ENCODE measurements at regions of chr1 and their contacts with region 1.

Region 1: GRCh38 chr1:54944610-54945544 is 35.6 kb upstream of the TMEM61 start:
- DNase-seq: peak; percentile 75
- H3K4me3 ChIP-seq: no peak overlapping the region
- H3K27ac ChIP-seq: peak overlapping the region; percentile 63
- H3K4me1 ChIP-seq: no peaks in the 10 kb centered on the region
- H3K27me3 ChIP-seq: no peaks in the 10 kb centered on the region
- CTCF ChIP-seq: peak; percentile 74

Region 2: GRCh38 chr1:55015731-55016620 is 71.1 kb after region 1 on chr1:
- intact Hi-C with region 1: loop called (anchors 5 kb)
- DNase-seq: no peak
- H3K4me3 ChIP-seq: no peak overlapping the region
- H3K27ac ChIP-seq: no peak overlapping the region
- H3K4me1 ChIP-seq: no peaks in the 10 kb centered on the region
- H3K27me3 ChIP-seq: no peaks in the 10 kb centered on the region
- CTCF ChIP-seq: no peak

Measured in colonic mucosa (tissue), 4 donors.